Heart right ventricle (tissue), 16 donors: ENCODE measurements at regions of chrX and their contacts with region 1.

Region 1: GRCh38 chrX:40108959-40109287 is 11.2 kb upstream of the BCOR start:
- DNase-seq: peak; percentile 74 to 84
- ATAC-seq: peak; percentile 60 to 82 (median 68)
- H3K4me3 ChIP-seq: peak overlapping the region; percentile 28 to 75 (median 59)
- H3K27ac ChIP-seq: peak overlapping the region; percentile 84 to 96 (median 93)
- H3K4me1 ChIP-seq: peaks cover 2 to 44% (median 34%) of the 10 kb centered on the region in 9 donors
- H3K27me3 ChIP-seq: peaks cover 0 to 73% (median 0%) of the 10 kb centered on the region in 7 donors
- CTCF ChIP-seq: no peak

Region 2: DNA sequence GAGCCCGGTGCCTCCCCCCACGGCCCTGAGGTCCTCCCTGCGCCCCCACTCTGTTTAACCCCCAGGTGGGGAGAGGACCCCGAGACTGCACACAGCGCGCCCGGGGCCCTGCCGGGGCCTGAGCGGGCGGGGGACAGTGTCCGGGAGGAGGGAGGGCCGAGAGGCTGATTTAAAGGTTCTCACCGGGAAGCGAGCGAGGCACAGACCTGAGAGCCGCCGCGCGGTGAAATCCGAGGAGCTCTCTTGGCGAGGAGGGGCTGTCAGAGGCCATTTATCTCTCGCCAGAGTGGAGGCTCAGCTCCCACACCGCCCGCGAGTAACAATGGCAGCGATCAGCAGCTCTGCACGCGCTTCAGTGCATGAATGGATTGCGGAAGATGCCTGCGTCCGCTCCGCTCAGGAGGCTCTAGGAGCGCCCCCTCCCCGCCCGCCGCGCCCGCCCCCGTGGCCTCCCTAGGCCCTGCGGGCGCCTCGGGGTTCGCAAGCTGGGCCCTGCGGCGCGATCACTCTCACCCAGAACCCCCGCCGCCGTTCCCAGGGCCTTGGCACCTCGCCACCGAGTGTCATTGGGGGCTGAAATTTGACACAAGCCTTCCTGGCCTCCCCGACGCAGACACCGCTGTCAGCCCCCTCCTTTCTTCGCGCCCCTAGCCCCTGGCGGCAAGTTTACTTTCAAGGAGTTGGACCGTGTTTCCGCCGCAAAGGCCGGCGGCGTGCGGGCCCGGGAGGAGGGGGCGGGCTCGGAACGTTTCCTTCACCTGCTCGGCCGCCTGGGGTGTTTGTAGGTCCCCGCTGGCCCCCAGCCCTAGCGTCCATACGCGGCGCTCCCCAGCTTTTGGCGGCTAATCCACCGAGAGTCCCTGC is 37.6 kb after region 1 on chrX:
- intact Hi-C with region 1: loop called in 6 of 10 experiments (anchors 5 to 10 kb)
- DNase-seq: peak in 1 of 2 donors; percentile 22
- ATAC-seq: peak; percentile 41 to 57 (median 47)
- H3K4me3 ChIP-seq: peak overlapping the region; percentile 35 to 65 (median 54)
- H3K27ac ChIP-seq: peak overlapping the region in 6 of 10 donors; percentile 35 to 74 (median 53)
- H3K4me1 ChIP-seq: peaks cover 0 to 61% (median 35%) of the 10 kb centered on the region in 9 donors
- H3K27me3 ChIP-seq: peaks cover 0 to 91% (median 0%) of the 10 kb centered on the region in 7 donors
- CTCF ChIP-seq: no peak

Region 3: DNA sequence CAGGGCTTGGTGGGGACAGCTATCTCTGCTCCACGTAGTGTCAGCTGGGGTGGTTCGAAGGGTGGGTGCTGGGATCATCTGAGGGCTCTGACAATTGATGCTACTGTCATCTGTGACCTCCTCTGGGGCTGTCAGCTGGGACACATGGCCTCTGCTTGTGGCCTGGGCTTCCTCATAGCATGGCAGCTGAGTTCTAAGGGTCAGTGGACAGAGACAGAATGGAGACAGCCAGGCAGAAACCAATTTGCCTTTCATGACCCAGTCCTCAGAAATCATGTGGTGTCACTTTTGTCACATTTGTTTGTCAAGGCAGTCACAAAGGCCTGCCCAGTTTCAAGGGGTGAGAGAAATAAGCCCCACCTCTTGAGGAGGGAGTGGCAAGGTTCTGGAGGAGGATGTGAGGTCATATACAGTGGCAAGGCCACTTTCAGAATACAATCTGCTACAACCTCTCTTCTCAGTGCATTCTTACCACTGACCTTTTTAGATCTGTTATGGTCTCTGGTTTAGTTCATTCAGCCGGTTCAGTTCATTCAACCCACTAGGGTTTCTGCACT is 92.5 kb after region 1 on chrX:
- intact Hi-C with region 1: no loop called
- DNase-seq: no peak
- ATAC-seq: no peak
- H3K4me3 ChIP-seq: no peak overlapping the region
- H3K27ac ChIP-seq: no peak overlapping the region
- H3K4me1 ChIP-seq: peaks cover 0 to 6% (median 0%) of the 10 kb centered on the region in 9 donors
- H3K27me3 ChIP-seq: peaks cover 0 to 12% (median 0%) of the 10 kb centered on the region in 7 donors
- CTCF ChIP-seq: no peak